Left ventricle myocardium superior (tissue), 1 donor: ENCODE measurements at regions of chr9 and their contacts with region 1.

Region 1: DNA sequence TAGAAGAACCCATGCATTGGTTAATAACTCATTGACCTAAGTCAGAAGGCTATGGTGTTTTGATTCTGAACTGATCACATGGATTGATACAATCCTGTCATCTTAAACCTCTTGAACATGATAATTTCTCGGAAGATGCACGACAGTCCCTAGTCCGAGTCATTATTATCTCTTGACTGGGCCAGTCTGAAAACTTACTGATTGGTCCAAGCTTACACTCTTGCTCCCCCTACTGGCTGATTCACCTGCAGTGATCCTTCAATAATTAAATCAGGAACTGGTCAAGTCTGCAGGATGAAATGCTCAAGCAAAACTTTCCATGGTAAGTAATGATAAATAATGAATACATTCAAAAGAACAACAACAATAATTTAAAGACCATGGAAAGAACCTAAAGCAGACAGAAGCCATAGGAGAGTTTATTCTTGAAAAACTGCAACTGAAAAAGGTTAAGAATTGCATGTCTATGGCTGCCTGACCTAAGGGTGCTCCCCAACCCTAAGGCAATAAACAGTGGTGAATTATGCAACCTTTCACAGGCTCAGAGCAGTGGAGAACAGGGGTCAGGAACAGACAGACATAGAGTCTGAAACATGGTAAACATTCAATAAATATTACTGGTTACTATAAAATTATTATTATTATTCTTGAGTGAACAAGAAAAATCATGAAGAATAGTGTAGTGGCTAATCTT is 79.3 kb downstream of the BRINP1 start:
- DNase-seq: no peak
- ATAC-seq: peak; percentile 65

Region 2: GRCh38 chr9:118829334-118829733 is 460.6 kb before region 1 on chr9:
- intact Hi-C with region 1: loop called (anchors 1 kb)
- DNase-seq: no peak
- ATAC-seq: peak; percentile 47

Region 3: DNA sequence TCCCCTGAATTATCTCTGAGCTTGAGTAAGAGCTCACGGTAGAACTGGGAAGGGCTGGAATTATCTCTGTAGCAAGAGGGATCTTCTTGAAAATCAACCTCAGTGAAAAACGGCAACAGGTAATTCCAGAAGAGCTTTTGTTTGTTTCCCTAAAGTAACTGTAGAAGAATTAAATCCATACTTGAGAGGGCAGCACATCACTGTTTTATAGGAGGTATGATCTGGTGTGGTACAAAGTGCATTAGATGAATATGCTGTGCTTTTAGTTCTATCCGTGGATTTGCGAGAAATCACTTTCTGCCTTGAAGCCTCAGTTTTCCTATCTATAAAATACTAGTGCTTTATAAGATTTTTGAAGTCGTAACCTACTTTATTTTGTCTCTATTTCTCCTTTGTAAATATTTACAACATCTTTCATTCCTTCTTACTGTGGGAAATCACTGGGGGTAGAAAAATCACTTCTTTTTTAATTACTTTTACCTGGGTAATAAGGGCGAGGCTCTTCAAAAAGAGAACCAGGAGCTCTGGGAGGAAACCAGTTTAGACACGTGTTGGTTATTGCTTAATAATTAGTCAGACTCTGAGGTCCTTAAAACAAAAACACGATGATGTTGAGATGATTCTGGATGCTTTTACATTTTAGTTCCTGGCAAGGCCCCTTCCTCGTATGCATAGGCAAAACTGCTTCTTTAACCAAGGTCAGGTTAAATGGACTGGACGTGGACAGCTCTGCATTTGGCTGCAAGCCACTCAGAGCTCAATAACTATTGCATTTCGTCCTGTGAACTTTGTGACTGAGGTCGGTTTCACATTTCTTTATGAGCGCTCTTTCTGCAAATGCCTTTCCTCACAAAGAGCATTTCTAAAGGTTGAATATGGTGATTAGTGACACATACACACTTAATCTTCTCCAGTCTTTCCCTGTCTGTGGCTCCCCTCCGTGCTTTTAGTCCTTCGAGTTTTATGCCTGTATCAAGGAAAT is 296.8 kb before region 1 on chr9:
- intact Hi-C with region 1: loop called (anchors 10 kb)
- DNase-seq: no peak
- ATAC-seq: no peak